Left lung (tissue), 14 donors: ENCODE measurements at regions of chr1 and their contacts with region 1.

Region 1: DNA sequence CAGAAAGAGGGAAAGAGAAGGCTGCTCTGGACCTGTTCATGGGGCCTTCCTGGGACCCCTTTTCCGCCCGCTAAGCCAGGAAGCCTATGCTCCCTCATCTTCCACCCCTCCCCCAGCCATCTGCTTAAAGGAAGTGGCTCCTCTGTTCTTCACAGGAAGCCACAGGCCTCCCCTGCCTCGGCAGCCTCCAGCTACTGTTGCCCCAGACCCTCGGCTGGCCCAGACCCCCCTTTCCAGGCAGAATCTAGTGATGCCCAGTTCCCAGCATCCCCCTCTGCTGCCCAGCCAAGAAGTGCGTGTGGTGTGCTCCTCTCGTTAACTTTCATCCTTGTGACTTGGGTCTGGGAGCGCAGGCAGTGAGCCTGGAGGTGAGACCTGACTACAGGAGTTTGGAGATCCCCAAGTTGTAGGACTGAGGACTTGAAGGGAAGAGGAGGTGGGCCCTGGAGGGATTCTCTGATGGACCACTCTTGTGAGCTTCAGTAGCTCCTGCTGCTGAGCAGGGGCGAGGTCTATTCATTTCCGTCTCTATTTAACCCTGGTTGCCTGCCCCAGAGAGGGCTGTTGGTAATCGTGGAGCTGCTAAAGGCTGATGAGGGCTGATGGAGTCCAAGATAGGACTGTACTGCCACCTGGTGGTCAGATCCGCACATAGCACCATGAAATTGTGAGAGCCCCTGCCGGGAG is 9.1 kb downstream of the IFI6 start:
- DNase-seq: peak; percentile 79 to 86 (median 80)
- ATAC-seq: peak; percentile 87
- H3K4me3 ChIP-seq: no peak overlapping the region
- H3K27ac ChIP-seq: peak overlapping the region; percentile 44 to 83
- H3K4me1 ChIP-seq: peaks cover 5 to 58% of the 10 kb centered on the region in 2 donors
- H3K27me3 ChIP-seq: no peaks in the 10 kb centered on the region
- CTCF ChIP-seq: peak; percentile 85 to 87

Region 2: DNA sequence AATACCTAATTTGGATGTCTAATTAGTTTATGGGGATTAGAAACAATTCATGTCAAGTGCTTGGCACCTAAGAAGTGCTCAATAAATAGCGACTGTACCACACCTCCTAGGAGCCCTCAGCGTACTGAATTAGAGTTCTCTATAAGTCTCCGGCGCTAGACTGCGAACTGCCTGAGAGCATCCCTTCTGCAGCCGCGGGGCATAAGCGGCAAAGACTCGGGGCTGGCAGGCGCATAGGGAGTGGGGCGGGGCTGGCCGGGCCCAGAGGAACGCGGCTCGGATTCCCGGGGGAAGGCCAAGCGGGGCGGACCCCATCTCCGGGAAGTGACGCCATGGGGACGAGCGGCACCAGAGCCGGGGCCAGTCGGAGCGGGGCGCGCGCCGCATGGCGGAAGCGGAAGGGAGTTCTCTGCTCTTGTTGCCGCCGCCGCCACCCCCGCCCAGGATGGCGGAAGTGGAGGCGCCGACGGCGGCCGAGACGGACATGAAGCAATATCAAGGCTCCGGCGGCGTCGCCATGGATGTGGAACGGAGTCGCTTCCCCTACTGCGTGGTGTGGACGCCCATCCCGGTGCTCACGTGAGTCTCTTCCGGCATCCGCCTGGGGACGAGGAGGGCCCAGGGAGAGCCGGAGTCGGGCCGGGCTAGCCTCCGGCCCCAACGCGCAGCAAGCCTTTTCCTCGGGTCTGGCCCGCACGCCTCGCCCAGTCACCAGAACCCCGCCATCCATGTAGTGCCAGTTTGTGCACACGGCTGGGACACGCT is 340.9 kb before region 1 on chr1 and contains the start of gene TMEM222:
- intact Hi-C with region 1: no loop called
- DNase-seq: peak; percentile 94 to 100 (median 98)
- ATAC-seq: peak; percentile 99
- H3K4me3 ChIP-seq: peak within 1 kb of the TSS; percentile 83 to 95
- H3K27ac ChIP-seq: peak within 1 kb of the TSS; percentile 82 to 97
- H3K4me1 ChIP-seq: peaks cover 12 to 49% of the 10 kb centered on the region in 2 donors
- H3K27me3 ChIP-seq: peaks cover 0 to 26% of the 10 kb centered on the region in 2 donors
- CTCF ChIP-seq: peak; percentile 16 to 44
- polyA plus RNA-seq, gene TMEM222: 31.6 to 40.4 (median 35.7) TPM

Region 3: DNA sequence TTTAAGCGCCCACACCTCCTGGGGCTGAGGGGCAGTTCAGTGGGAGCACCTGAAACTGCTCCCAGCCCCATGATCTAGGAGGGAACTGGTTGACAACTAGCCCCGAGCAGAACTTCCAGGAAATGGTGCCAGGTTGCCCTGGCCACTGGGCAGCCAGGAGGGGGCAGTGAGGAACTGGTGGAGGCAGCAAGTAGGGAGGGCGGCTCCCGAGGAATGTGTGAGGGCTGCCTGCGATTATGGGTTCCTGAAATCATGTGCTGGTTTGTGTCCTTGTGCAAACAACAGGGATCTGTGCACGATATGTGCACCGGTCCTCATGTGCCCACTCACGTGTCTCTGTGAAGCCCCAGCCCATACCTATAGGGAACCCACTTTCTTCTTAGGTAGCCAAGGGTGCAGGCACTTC is 260.5 kb before region 1 on chr1:
- intact Hi-C with region 1: loop called in 1 of 2 experiments (anchors 10 kb)
- DNase-seq: peak in 3 of 4 donors; percentile 69 to 88 (median 86)
- ATAC-seq: peak; percentile 83
- H3K4me3 ChIP-seq: no peak overlapping the region
- H3K27ac ChIP-seq: peak overlapping the region; percentile 59 to 60
- H3K4me1 ChIP-seq: peaks cover 26 to 56% of the 10 kb centered on the region in 2 donors
- H3K27me3 ChIP-seq: no peaks in the 10 kb centered on the region
- CTCF ChIP-seq: peak; percentile 34 to 52

Region 4: DNA sequence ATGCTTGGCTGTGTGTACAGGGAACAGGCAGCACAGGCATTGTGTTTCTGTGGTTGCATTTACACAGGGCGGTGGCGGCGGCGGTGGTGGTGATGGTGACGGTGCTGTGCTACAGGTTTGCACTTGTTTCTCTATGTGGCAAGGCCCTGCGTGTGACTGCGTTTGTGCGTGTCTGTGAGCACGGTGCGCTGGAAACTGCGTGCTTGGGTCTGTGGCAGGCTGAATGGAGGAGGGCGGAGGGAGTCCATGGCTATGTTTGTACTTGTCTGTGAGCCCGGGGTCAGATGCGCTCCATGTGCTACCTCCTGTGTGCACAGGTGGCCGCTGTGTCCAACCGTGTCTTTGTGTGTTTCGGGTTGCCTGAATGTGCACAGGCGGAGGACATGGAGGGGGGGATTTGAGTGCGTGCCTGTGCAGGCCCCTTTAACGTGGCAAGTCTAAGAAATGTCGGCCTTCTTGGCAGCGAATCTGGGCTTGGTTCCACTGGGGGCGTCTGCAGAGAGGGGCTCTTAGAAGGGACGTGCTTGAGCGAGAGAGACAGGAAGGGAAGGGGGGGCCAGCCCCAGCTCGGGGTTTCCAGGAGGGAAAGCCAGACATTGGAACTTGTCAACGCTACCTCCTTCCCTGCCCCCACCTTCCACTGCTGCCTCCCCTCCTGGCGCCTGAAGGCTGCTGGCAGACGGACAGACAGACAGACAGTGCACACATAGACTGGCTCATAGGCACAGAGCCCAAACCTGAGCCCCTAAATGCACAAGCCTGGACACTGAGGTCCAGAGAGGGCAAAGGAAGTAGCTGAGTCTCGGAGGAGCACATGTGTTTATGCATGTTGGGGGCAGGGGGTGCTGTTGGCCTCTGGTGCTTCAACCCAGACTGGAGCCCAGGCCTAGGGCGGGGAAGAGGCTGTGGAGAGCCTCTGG is 140.2 kb before region 1 on chr1:
- intact Hi-C with region 1: no loop called
- DNase-seq: peak in 2 of 4 donors; percentile 79 to 83
- ATAC-seq: no peak
- H3K4me3 ChIP-seq: peak overlapping the region in 1 of 2 donors; percentile 7
- H3K27ac ChIP-seq: peak overlapping the region; percentile 26 to 41
- H3K4me1 ChIP-seq: peaks cover 41 to 74% of the 10 kb centered on the region in 2 donors
- H3K27me3 ChIP-seq: peaks cover 0 to 3% of the 10 kb centered on the region in 2 donors
- CTCF ChIP-seq: peak in 1 of 2 donors; percentile 19

Region 5: DNA sequence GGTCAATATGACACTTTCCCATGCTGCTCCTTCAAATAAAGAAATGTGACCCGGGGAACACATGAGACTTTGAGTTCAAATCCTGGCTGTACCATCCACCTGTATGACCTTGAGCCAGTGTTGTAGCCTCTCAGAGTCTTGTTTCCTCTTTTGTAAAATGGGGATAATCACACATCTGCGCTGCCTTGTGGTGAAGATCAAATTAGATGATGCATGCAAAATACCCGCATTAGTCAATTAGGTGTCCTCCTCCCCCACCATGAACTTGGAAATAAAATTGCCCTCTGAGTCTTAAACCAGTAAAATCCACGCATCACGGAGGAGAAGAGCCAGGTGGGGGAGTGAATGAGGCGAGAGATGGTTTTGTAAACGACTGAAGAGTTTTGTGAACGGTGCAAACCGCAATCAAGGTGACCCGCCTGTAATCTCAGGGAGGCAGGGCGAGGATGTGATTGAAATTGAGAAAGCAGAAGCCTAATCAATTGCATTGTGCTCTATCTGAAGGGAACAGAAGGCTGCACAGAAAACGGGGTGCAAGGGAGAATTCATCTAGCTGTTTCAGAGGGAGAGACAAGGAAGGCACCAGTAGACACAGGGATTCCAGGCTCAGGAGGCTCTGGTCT is 53.1 kb before region 1 on chr1:
- intact Hi-C with region 1: loop called (anchors 2 to 5 kb)
- DNase-seq: no peak
- ATAC-seq: no peak
- H3K4me3 ChIP-seq: no peak overlapping the region
- H3K27ac ChIP-seq: peak overlapping the region in 1 of 2 donors; percentile 61
- H3K4me1 ChIP-seq: peaks cover 4 to 47% of the 10 kb centered on the region in 2 donors
- H3K27me3 ChIP-seq: no peaks in the 10 kb centered on the region
- CTCF ChIP-seq: no peak